Panc1 (cell line): ENCODE measurements at regions of chr3 and their contacts with region 1.

Region 1: GRCh38 chr3:141738022-141738890 is at the start of gene RNF7:
- DNase-seq: peak; percentile 87
- ATAC-seq: peak; percentile 98
- H3K4me3 ChIP-seq: peak within 1 kb of the TSS; percentile 88 to 93
- H3K27ac ChIP-seq: peak within 1 kb of the TSS; percentile 97
- H3K4me1 ChIP-seq: peaks cover 28% of the 10 kb centered on the region
- H3K27me3 ChIP-seq: no peaks in the 10 kb centered on the region
- CTCF ChIP-seq: peak; percentile 100
- total RNA-seq, gene RNF7: 87.3 TPM

Region 2: DNA sequence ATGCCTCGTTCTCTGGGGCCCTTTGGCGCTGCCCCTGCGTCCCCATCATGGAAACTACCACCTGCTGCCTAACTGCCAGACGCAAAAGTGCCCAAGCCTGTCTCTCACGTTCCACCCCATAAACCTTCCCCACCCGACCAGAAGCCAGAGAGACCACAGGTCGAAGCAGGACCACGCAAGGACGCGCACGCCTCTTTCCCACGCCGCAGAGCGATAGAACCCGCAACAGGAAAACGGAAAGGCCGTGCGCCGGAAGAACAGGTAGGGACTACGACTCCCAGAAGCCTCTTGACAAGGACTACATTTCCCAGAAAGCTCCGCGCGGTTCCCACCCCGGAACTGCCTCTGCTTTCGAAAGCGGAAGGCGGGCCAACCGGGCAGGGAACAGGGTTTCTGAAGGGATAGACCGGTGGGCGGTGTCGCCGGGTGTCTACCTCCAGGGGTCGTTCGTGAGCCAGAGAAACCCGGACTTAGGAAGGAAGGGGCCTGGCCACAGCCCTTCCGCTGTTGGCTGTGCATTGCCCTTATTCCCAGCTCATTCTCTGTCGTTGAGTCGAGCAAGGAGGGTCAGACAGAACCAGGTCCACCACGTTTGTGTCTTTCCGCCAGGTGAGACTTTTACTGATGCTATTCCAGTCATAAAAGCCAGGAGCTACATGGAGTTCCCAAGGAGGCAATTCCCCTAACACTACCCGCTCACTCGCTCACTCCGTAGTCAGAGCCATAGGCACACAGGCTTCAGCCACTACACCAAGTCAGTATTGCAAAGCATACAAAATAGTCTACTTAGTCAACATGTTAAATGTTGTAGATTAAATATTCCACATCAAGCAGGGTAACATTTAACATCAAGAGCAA is 426.5 kb before region 1 on chr3:
- CTCF ChIA-PET with region 1: no interaction called
- POLR2A ChIA-PET with region 1: no interaction called
- in situ Hi-C with region 1: no loop called
- intact Hi-C with region 1: no loop called
- DNase-seq: peak; percentile 85
- ATAC-seq: peak; percentile 98
- H3K4me3 ChIP-seq: peak overlapping the region; percentile 67 to 86
- H3K27ac ChIP-seq: peak overlapping the region; percentile 93
- H3K4me1 ChIP-seq: peaks cover 8% of the 10 kb centered on the region
- H3K27me3 ChIP-seq: no peaks in the 10 kb centered on the region
- CTCF ChIP-seq: peak; percentile 91

Region 3: DNA sequence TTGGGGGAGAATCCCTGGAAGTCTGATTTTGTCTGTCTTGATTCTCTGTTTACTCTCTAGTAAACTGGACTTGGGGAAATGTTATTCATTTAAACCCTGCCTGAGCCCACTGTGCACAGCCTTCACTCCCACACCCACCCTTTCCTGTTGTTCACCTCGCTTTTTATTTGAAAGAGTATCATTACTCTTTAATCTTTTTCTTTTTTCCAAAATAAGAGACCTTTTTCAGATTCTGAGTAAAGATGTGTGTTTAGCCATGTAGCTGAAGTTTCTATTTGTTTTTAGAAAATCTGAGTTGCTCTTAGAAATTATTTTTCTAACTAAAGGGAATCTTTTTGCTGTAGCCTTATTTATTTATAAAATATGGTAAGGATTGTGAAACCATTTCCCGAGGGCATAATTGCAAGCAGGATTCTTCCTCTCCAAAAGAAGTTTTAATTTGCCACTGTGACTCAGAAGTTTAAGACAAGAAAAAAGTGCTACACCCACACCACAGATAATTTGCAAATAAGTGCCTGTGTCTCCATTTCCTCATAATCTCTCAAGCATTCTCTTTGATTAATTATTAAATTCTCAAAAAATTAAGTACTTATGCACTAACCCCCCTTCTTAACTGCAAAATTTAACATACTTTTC is 208.0 kb before region 1 on chr3:
- CTCF ChIA-PET with region 1: no interaction called
- POLR2A ChIA-PET with region 1: no interaction called
- in situ Hi-C with region 1: no loop called
- intact Hi-C with region 1: no loop called
- DNase-seq: no peak
- ATAC-seq: no peak
- H3K4me3 ChIP-seq: no peak overlapping the region
- H3K27ac ChIP-seq: no peak overlapping the region
- H3K4me1 ChIP-seq: no peaks in the 10 kb centered on the region
- H3K27me3 ChIP-seq: no peaks in the 10 kb centered on the region
- CTCF ChIP-seq: no peak

Region 4: DNA sequence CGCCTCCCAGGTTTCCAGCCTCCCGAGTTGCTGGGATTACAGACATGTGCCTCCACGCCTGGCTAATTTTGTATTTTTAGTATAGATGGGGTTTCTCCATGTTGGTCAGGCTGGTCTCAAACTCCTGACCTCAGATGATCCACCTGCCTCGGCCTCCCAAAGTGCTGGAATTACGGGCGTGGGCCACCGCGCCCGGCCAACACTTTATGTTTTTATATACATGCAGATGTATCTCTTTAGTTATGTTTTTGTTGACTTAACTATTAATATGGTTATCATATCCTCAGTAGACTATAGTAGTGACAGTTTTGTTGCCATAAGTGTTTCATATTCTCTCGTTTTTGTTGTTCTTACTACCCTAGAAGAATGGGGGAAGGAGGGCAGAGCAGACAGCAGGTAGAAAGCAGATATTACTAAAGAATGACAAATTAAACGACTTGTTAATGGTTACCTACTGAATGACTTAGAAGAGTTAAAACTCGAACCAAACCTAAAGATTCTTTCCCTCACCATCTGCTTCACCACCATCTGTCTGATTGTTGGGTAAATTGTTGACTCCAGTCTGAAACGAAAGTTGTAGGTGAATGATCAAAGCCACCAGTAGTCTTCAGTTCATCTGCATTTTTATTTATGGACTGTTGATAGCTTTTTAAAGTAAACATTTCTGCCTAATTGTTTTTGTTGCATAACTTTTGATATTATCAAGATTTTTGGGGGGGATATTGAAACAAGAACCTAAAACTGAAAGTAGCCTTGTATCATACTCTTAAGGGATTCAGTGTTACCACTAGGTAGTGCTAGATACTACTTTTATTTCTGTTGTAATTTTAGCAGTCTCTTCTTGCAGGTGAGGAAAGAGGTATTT is 162.1 kb before region 1 on chr3:
- CTCF ChIA-PET with region 1: no interaction called
- POLR2A ChIA-PET with region 1: no interaction called
- in situ Hi-C with region 1: no loop called
- intact Hi-C with region 1: loop called (anchors 5 kb)
- DNase-seq: no peak
- ATAC-seq: peak; percentile 77; the same call in 1 of the 2 replicates
- H3K4me3 ChIP-seq: no peak overlapping the region
- H3K27ac ChIP-seq: no peak overlapping the region
- H3K4me1 ChIP-seq: no peaks in the 10 kb centered on the region
- H3K27me3 ChIP-seq: no peaks in the 10 kb centered on the region
- CTCF ChIP-seq: peak; percentile 72; the same call in 1 of the 2 replicates

Region 5: DNA sequence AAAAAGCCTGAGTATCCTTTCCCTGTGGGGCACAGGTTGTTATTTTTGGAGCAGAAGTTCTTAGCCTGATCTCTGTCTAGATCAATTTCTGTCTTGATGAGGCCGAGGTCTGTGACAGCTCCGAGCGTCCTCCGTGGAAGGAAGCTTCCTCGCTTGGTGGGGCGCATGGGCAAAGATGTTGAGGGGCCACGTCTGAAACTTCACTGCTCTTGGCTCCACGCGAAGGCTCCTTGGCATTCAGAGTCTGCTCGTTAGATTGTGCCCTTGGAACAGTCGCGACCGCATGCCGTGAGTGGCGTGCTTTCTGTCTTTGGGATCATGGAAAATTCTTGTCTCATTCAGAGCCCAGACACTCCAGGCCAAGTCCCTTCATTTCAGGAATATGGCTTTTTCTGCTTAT is 38.6 kb after region 1 on chr3:
- CTCF ChIA-PET with region 1: no interaction called
- POLR2A ChIA-PET with region 1: no interaction called
- in situ Hi-C with region 1: no loop called
- intact Hi-C with region 1: no loop called
- DNase-seq: no peak
- ATAC-seq: peak; percentile 22; the same call in 1 of the 2 replicates
- H3K4me3 ChIP-seq: no peak overlapping the region
- H3K27ac ChIP-seq: no peak overlapping the region
- H3K4me1 ChIP-seq: no peaks in the 10 kb centered on the region
- H3K27me3 ChIP-seq: no peaks in the 10 kb centered on the region
- CTCF ChIP-seq: no peak

Region 6: DNA sequence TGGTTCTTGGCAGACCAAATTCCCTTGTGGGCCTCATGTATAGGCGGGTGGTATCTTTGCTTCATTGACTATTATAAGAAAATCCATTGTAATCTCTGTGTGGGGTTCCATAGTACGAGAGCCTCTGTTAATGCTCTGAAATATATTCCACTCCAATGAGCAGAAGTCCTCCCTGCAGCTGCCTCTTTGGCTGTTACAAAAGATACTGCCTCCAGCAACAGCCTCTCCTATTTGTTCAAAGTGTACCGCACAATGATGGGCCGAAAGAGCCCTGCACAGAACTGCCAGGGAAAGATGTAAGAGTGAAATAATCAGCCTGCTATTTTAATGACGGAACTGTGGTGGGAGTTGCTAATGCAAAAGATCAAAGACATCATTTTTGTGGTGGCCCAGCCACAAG is 73.8 kb after region 1 on chr3:
- CTCF ChIA-PET with region 1: no interaction called
- POLR2A ChIA-PET with region 1: no interaction called
- in situ Hi-C with region 1: no loop called
- intact Hi-C with region 1: no loop called
- DNase-seq: no peak
- ATAC-seq: no peak
- H3K4me3 ChIP-seq: no peak overlapping the region
- H3K27ac ChIP-seq: no peak overlapping the region
- H3K4me1 ChIP-seq: no peaks in the 10 kb centered on the region
- H3K27me3 ChIP-seq: peaks cover under 1% of the 10 kb centered on the region; the same call in 1 of the 2 replicates
- CTCF ChIP-seq: no peak

Region 7: GRCh38 chr3:141875374-141875892 is 137.2 kb after region 1 on chr3:
- CTCF ChIA-PET with region 1: interaction called, 6 read pairs
- POLR2A ChIA-PET with region 1: no interaction called
- in situ Hi-C with region 1: no loop called
- intact Hi-C with region 1: loop called (anchors 2 kb)
- DNase-seq: peak; percentile 61
- ATAC-seq: peak; percentile 86
- H3K4me3 ChIP-seq: peak overlapping the region; percentile 83 to 98
- H3K27ac ChIP-seq: peak overlapping the region; percentile 77
- H3K4me1 ChIP-seq: peaks cover 10% of the 10 kb centered on the region; the same call in 1 of the 2 replicates
- H3K27me3 ChIP-seq: no peaks in the 10 kb centered on the region
- CTCF ChIP-seq: peak; percentile 98

Region 8: DNA sequence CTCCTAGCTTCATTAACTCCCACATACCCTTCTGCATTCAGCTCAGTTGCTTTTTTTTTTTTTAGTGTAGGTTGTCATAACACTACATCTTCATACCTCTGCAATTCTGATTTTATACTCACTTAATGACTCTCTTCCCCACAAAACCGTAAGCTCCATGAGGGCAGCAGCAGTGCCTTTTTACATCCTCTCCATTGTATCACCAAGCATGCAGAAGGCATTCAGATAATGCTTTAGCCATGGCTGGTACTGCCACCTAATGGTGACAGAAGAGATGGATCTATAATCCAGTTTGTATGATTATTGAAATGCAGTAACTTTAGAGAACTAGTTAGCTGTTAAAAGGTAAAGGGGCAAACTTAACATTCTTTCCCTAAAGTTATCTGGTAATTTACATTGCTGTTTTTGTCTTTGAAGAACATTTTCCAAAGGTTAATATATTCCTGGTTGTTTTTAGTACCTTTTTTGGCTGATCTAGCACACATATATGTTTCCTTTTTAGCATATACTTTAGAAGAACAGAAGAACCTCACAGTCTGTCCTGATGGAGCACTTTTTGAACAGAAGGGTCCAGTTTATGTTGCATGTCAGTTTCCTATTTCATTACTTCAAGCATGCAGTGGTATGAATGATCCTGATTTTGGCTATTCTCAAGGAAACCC is 175.0 kb after region 1 on chr3:
- CTCF ChIA-PET with region 1: interaction called, 5 read pairs
- POLR2A ChIA-PET with region 1: no interaction called
- in situ Hi-C with region 1: no loop called
- intact Hi-C with region 1: loop called (anchors 10 kb)
- DNase-seq: no peak
- ATAC-seq: peak; percentile 92
- H3K4me3 ChIP-seq: no peak overlapping the region
- H3K27ac ChIP-seq: no peak overlapping the region
- H3K4me1 ChIP-seq: no peaks in the 10 kb centered on the region
- H3K27me3 ChIP-seq: no peaks in the 10 kb centered on the region
- CTCF ChIP-seq: peak; percentile 85

Region 9: DNA sequence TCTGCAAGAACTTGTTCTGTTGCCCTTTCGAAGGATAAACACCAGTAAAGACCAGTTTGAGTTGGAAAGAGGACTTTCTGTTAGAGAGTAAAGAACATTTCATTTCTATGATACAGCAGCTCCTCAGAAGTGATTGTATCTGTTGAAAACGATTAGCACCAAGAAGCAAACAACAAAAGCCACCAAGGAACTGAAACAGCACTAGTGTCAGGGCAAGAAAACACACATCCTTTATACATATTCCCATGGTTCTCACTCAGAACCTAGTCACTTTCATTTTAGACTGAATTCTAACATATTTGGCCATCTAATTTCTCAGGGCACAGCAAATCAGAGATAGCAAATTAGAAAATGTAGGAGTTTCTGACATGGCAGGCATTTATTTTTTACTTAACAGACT is 254.3 kb after region 1 on chr3:
- CTCF ChIA-PET with region 1: interaction called, 12 read pairs
- POLR2A ChIA-PET with region 1: no interaction called
- in situ Hi-C with region 1: no loop called
- intact Hi-C with region 1: loop called (anchors 10 kb)
- DNase-seq: no peak
- ATAC-seq: no peak
- H3K4me3 ChIP-seq: no peak overlapping the region
- H3K27ac ChIP-seq: no peak overlapping the region; the same call in 1 of the 2 replicates
- H3K4me1 ChIP-seq: peaks cover 10% of the 10 kb centered on the region; the same call in 1 of the 2 replicates
- H3K27me3 ChIP-seq: no peaks in the 10 kb centered on the region
- CTCF ChIP-seq: no peak

Region 10: DNA sequence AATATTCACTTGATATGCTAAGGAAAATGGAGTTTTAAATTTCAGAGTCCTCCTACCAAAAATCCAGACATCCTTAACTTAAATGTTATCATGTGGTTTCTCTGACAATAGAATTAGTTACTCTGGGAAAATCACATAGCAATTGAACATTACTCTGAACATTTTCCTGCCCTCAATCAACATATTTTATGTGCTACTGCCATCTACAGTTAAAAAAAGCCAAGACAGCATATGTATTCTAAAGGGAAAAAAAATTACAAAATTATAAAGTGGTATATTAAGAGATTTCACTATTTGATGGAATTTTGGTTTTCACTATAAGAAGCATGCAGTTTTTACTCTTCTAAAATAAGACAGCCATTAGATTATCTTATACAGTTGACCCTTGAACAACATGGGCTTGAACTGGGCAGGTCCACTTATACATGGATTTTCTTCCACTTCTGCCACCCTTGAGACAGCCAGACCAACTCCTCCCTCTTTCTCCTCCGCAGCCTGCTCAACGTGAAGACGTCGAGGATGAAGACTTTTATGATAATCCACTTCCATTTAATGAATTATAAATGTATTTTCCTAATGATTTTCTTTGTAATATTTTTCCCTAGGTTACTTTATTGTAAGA is 260.5 kb after region 1 on chr3:
- CTCF ChIA-PET with region 1: no interaction called
- POLR2A ChIA-PET with region 1: no interaction called
- in situ Hi-C with region 1: no loop called
- intact Hi-C with region 1: loop called (anchors 10 kb)
- DNase-seq: no peak
- ATAC-seq: peak; percentile 72
- H3K4me3 ChIP-seq: no peak overlapping the region
- H3K27ac ChIP-seq: no peak overlapping the region
- H3K4me1 ChIP-seq: peaks cover 10% of the 10 kb centered on the region; the same call in 1 of the 2 replicates
- H3K27me3 ChIP-seq: no peaks in the 10 kb centered on the region
- CTCF ChIP-seq: peak; percentile 71